OCI-LY7 (cell line): ENCODE measurements at regions of chr15 and their contacts with region 1.

Region 1: DNA sequence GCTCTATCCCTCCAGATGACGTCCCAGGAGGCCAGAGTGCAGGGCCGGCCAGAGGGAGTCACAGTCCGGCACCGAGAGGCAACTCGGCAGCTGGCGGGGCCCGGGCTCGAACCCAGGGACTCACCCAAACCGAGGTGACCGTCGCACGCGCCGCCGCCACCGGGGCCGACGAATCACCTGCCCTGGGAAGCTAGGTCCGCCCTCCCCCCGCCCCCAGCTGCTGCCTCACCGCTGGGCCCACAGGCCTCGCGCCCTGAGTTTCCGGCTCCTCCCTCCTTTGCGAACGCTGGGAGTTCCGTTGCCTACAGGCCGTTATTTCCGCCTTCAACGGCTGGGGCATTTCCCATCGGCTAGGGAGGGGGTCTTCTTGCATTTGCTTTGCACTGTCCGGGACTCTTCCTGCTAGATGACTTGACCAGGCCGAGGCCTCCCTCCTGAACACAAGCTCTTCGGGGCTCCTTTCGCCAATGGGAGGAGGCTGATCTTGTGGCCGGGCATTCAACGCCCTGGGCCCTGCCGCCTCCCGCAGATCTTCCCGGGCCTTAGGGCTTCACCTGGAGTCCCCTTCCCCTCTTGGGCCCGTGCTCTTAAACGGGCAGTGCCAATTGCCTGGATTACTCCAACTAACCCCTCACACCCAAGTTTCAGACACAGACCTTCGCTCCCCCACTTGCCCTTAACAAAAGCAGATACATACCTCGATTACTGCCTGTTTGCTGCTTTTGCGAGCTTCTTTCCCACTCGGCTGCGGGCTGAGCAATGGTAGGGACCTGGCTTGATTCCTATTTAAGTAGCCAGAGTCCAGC is at the start of gene SNUPN:
- DNase-seq: peak; percentile 98
- H3K4me3 ChIP-seq: peak within 1 kb of the TSS; percentile 99
- H3K27ac ChIP-seq: peak within 1 kb of the TSS; percentile 93
- H3K4me1 ChIP-seq: peaks cover 21% of the 10 kb centered on the region
- CTCF ChIP-seq: no peak
- total RNA-seq, gene SNUPN: 32.4 and 44.4 TPM in 2 replicates

Region 2: DNA sequence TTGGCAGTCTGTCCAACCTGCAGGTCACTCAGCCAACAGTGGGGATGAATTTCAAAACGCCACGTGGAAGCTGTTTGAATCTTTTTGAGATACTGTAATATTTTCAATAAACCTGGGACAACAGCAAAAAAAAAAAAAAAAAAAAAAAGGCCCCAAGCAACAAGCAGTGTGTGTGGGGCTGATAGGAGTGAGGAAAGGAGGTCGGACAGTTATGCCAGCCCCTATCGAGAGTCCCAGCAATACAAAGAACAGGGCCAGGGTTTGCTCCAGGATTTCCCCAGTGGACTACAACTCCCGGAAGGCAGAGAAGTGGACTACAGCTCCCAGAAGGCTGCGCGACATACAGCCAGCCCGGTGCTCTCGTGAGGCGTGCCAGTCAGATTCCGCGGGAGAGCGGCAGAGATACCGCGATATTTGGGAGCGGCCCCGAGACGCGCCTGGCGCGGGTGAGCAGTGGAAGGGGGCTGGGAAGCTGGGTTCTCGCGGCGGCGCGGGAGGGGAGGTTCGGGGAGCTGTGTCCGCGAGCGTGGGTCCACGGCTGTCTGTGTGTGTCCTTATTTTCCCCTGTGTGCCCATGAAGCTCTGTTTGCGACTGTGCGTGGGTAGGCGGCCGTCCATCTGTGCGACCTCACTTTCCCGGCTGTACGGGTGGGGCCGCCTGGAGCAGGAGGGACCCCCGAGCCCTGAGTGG is 602.4 kb before region 1 on chr15 and contains the start of gene PPCDC:
- CTCF ChIA-PET with region 1: no interaction called
- POLR2A ChIA-PET with region 1: no interaction called
- intact Hi-C with region 1: loop called (anchors 5 kb)
- DNase-seq: peak; percentile 97
- H3K4me3 ChIP-seq: peak within 1 kb of the TSS; percentile 90
- H3K27ac ChIP-seq: peak within 1 kb of the TSS; percentile 76
- H3K4me1 ChIP-seq: peaks cover 72% of the 10 kb centered on the region
- CTCF ChIP-seq: no peak
- total RNA-seq, gene PPCDC: 32.0 and 44.3 TPM in 2 replicates

Region 3: DNA sequence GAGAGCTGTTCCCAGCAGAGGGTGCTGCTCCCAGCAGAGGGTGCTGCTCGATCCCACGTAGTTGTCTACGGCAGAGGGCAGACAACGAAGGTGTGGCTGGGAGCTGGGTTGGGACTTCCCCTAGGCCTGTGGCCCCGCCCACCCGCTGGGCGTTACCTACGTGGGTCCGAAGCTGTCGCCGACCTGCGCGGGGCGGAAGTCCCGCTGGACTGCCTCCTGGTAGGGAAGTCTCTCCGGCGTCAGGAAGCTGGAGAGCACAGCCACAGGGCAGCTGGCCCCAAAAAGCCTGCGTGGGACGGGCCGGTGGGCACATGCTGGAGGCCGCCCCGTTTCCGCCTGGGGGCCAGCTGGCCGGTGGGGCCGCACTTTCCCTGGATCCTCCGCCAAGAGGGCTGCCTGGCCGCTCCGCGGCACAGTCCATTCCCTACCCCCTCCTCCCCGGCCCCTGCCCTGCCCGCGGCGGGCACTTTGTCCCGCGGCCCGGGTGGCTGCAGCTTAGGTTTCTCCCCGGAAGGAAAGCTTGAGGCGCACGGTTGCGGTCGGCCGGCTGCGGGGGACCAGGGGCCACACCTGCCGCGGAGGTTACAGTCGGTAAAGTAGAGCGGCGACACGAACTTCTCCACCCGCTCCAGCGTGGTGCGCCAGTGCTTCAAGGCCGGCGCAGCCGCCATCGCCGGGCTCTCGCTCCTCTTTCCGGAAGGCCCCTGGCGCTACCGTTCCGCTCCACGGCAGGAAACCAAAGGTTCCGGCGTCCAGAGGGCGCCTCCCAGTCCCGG is 257.6 kb before region 1 on chr15 and contains the start of gene MAN2C1:
- CTCF ChIA-PET with region 1: no interaction called
- POLR2A ChIA-PET with region 1: no interaction called
- intact Hi-C with region 1: loop called (anchors 1 kb)
- DNase-seq: peak; percentile 99
- H3K4me3 ChIP-seq: peak within 1 kb of the TSS; percentile 77
- H3K27ac ChIP-seq: peak within 1 kb of the TSS; percentile 88
- H3K4me1 ChIP-seq: peaks cover 23% of the 10 kb centered on the region
- CTCF ChIP-seq: peak; percentile 89
- total RNA-seq, gene MAN2C1: 98.8 and 113 TPM in 2 replicates

Region 4: GRCh38 chr15:75578948-75579920 is 46.5 kb before region 1 on chr15 and contains the start of gene PTPN9:
- CTCF ChIA-PET with region 1: no interaction called
- POLR2A ChIA-PET with region 1: interaction called, 3 read pairs
- intact Hi-C with region 1: loop called (anchors 2 kb)
- DNase-seq: peak; percentile 87
- H3K4me3 ChIP-seq: peak within 1 kb of the TSS; percentile 88
- H3K27ac ChIP-seq: peak within 1 kb of the TSS; percentile 71
- H3K4me1 ChIP-seq: peaks cover 14% of the 10 kb centered on the region
- CTCF ChIP-seq: peak; percentile 66
- total RNA-seq, gene PTPN9: 12.5 and 16.5 TPM in 2 replicates